Mammary epithelial cell (primary cell): ENCODE measurements at regions of chr19 and their contacts with region 1.

Region 1: DNA sequence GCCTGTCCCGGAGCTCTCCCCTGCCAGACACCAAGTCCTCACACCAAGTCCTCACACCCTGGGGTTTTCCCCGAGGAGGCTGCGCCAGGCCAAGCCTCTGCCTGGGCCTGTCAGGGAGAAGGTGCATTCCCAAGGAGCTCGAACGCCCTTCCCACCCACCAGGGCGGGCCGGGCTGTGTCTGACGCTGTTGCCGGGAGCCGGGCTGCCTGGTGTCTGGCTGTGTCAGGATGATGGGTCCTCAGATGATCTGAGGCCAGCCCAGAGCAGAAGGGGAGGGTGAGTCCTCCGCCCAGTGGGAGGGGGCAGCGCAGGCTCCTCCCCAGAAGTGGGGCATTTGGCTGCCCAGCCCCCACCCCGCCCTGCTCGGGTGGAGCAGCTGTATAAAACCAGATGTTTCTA is 2.3 kb upstream of the HAS1 start:
- DNase-seq: peak; percentile 100
- H3K4me3 ChIP-seq: no peak overlapping the region
- H3K27ac ChIP-seq: peak overlapping the region; percentile 87
- H3K4me1 ChIP-seq: peaks cover 23% of the 10 kb centered on the region
- H3K27me3 ChIP-seq: no peaks in the 10 kb centered on the region
- CTCF ChIP-seq: no peak

Region 2: GRCh38 chr19:51387924-51388389 is 338.1 kb before region 1 on chr19 and contains the start of gene LIM2:
- CTCF ChIA-PET with region 1: interaction called, 22 read pairs
- dilution Hi-C with region 1: no loop called
- in situ Hi-C with region 1: no loop called
- intact Hi-C with region 1: no loop called
- DNase-seq: no peak
- H3K4me3 ChIP-seq: no peak within 1 kb of the TSS
- H3K27ac ChIP-seq: no peak within 1 kb of the TSS
- H3K4me1 ChIP-seq: no peaks in the 10 kb centered on the region
- H3K27me3 ChIP-seq: no peaks in the 10 kb centered on the region
- CTCF ChIP-seq: no peak
- total RNA-seq, gene LIM2: not detected

Region 3: DNA sequence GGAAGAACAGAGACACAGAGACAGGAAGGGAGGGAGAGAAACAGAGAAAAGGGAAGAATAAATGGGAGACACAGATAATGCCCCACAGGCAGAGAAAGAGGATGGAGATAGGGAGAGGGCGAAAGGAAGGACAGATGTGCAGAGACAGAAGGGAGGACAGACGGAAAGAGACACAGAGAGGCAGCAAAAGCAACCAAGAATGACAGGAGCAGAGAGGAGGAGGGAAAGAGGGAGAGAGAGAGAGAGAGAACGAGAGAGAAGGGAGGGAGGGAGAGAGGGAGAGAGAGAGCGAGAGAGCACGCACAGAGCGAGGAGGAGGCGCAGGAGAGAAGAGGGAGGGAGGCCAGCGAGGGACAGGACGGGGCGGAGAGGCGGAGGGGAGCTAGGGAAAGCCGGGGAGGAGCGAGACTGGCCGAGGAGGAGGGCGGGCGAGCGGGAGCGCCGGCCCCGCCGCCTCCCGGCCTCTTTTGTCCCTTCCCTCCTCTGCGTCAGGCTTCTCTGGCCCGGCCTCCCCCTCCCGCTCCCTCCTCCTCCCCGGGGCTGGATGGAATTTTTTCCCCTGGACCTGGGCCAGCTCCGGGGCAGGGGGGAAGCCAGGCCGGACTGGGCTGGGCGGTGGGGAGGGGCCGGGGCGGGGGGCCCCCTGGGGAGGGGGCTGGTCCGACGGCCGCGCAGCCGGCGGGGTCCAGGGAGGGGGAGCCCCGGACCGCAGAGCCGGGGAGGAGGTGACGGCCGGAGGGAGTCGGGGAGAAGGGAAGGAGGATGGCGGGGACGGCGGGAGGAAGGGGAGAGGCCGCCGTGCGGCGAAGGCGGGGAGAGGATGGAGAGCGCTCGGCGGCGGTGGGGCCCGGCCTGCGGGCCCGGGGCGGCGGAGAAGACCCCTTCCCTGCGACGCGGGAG is 37.1 kb before region 1 on chr19:
- CTCF ChIA-PET with region 1: interaction called, 3 read pairs
- dilution Hi-C with region 1: no loop called
- in situ Hi-C with region 1: no loop called
- intact Hi-C with region 1: loop called (anchors 2 kb)
- DNase-seq: peak; percentile 94
- H3K4me3 ChIP-seq: peak overlapping the region; percentile 80 to 94 (median 82)
- H3K27ac ChIP-seq: peak overlapping the region; percentile 58
- H3K4me1 ChIP-seq: peaks cover 25% of the 10 kb centered on the region
- H3K27me3 ChIP-seq: no peaks in the 10 kb centered on the region
- CTCF ChIP-seq: no peak

Region 4: DNA sequence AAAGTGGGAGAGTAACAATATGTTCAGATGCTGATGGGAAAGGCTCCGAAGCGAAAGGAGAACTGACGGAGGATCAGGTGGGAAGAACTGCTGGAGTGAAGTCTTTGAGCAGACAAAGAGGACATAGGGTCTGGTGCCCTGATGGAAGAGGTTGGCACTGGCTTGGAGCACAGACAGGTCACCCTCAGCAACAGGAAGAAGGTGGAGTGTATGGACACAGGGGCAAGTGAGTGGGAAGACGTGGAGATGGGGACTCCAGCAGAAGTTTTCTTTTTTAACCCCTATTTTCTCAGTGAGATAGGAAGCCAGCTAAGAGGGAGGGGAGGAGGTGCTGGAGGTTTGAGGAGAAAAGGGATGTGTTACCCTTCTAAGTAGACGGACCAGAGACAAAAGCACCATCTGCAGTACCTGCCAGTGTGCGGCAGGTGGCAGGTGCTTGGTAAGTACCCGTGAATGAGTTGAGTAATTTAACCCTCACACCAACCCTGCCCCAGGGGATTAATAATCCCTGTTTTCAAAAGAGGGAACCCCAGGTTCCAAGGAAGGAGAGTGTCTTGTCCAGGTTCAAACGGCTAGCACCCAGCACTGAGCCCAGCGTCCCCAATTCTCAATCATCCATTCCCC is 13.5 kb before region 1 on chr19:
- CTCF ChIA-PET with region 1: no interaction called
- dilution Hi-C with region 1: no loop called
- in situ Hi-C with region 1: no loop called
- intact Hi-C with region 1: loop called (anchors 1 kb)
- DNase-seq: peak; percentile 69
- H3K4me3 ChIP-seq: no peak overlapping the region
- H3K27ac ChIP-seq: no peak overlapping the region
- H3K4me1 ChIP-seq: no peaks in the 10 kb centered on the region
- H3K27me3 ChIP-seq: peaks cover 2% of the 10 kb centered on the region
- CTCF ChIP-seq: peak; percentile 80 to 90

Region 5: GRCh38 chr19:51751655-51752054 is 25.6 kb after region 1 on chr19 and contains the start of gene FPR1:
- CTCF ChIA-PET with region 1: no interaction called
- dilution Hi-C with region 1: no loop called
- in situ Hi-C with region 1: no loop called
- intact Hi-C with region 1: loop called (anchors 1 kb)
- DNase-seq: peak; percentile 95
- H3K4me3 ChIP-seq: no peak within 1 kb of the TSS
- H3K27ac ChIP-seq: peak within 1 kb of the TSS; percentile 46
- H3K4me1 ChIP-seq: peaks cover 13% of the 10 kb centered on the region
- H3K27me3 ChIP-seq: no peaks in the 10 kb centered on the region
- CTCF ChIP-seq: no peak
- total RNA-seq, gene FPR1: under 0.01 to 0.31 TPM

Region 6: GRCh38 chr19:51784922-51785690 is 59.1 kb after region 1 on chr19:
- CTCF ChIA-PET with region 1: no interaction called
- dilution Hi-C with region 1: no loop called
- in situ Hi-C with region 1: no loop called
- intact Hi-C with region 1: no loop called
- DNase-seq: peak; percentile 98
- H3K4me3 ChIP-seq: no peak overlapping the region
- H3K27ac ChIP-seq: peak overlapping the region; percentile 58
- H3K4me1 ChIP-seq: peaks cover 12% of the 10 kb centered on the region
- H3K27me3 ChIP-seq: no peaks in the 10 kb centered on the region
- CTCF ChIP-seq: no peak

Region 7: GRCh38 chr19:51904331-51905165 is 178.5 kb after region 1 on chr19 and contains the start of gene ZNF649:
- CTCF ChIA-PET with region 1: no interaction called
- dilution Hi-C with region 1: no loop called
- in situ Hi-C with region 1: no loop called
- intact Hi-C with region 1: no loop called
- DNase-seq: peak; percentile 85
- H3K4me3 ChIP-seq: peak within 1 kb of the TSS; percentile 84 to 89 (median 88)
- H3K27ac ChIP-seq: peak within 1 kb of the TSS; percentile 64
- H3K4me1 ChIP-seq: no peaks in the 10 kb centered on the region
- H3K27me3 ChIP-seq: no peaks in the 10 kb centered on the region
- CTCF ChIP-seq: no peak
- total RNA-seq, gene ZNF649: 10.2 to 18.7 TPM